Panc1 (cell line): ENCODE measurements at regions of chr14 and their contacts with region 1.

Region 1: GRCh38 chr14:73261520-73262426 is 24.5 kb downstream of the PAPLN start:
- DNase-seq: no peak
- ATAC-seq: no peak
- H3K4me3 ChIP-seq: no peak overlapping the region
- H3K27ac ChIP-seq: no peak overlapping the region
- H3K4me1 ChIP-seq: no peaks in the 10 kb centered on the region
- H3K27me3 ChIP-seq: no peaks in the 10 kb centered on the region
- CTCF ChIP-seq: no peak

Region 2: GRCh38 chr14:73239393-73240241 is 22.2 kb before region 1 on chr14:
- CTCF ChIA-PET with region 1: no interaction called
- POLR2A ChIA-PET with region 1: interaction called, 13 read pairs
- in situ Hi-C with region 1: no loop called
- intact Hi-C with region 1: no loop called
- DNase-seq: no peak
- ATAC-seq: no peak
- H3K4me3 ChIP-seq: peak overlapping the region; percentile 19 to 36
- H3K27ac ChIP-seq: no peak overlapping the region
- H3K4me1 ChIP-seq: peaks cover 20% of the 10 kb centered on the region
- H3K27me3 ChIP-seq: 0 out of 2 replicates have a peak, but pooled peaks cover 2% of the 10 kb centered on the region
- CTCF ChIP-seq: no peak